ENCODE measurements at regions of chr7 and their contacts with region 1.

Region 1: GRCh38 chr7:96709381-96710228 is at the start of gene SEM1:
- H3K4me3 Mint-ChIP-seq: peak within 1 kb of the TSS; percentile 99
- H3K27ac Mint-ChIP-seq: peak within 1 kb of the TSS; percentile 95
- H3K4me1 Mint-ChIP-seq: peaks cover 6% of the 10 kb centered on the region
- H3K27me3 Mint-ChIP-seq: peaks cover 16% of the 10 kb centered on the region

Region 2: DNA sequence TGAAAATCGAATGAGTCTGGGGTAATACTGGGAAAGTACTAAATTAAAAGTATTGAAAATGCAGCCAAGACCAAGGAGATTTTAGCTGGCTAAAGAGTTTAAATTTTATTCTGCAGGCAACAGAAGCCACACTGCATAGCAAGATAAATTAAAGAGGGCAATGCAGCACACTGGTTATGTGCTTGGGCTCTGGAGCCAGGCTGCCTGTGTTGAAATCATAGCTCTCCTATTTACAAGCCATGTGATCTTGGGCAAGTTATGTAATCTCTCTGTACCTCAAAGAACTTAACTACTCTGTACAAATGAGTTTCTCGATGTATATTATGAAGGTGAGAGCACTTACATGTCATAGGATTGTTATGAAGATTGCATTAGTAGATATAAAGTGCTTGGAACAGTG is 397.6 kb before region 1 on chr7:
- intact Hi-C with region 1: loop called (anchors 10 kb)
- H3K4me3 Mint-ChIP-seq: no peak overlapping the region
- H3K27ac Mint-ChIP-seq: no peak overlapping the region
- H3K4me1 Mint-ChIP-seq: peaks cover 69% of the 10 kb centered on the region
- H3K27me3 Mint-ChIP-seq: no peaks in the 10 kb centered on the region